GM12878 (cell line): ENCODE measurements at regions of chr2 and their contacts with region 1.

Region 1: GRCh38 chr2:34105015-34105767 is 506.1 kb upstream of the FAM98A start:
- DNase-seq: no peak
- ATAC-seq: no peak
- H3K4me3 ChIP-seq: no peak overlapping the region
- H3K27ac ChIP-seq: no peak overlapping the region
- H3K4me1 ChIP-seq: no peaks in the 10 kb centered on the region
- H3K27me3 ChIP-seq: no peaks in the 10 kb centered on the region; a peak in 1 of 4 replicates
- CTCF ChIP-seq: no peak
- EP300 ChIP-seq: no peak
- POLR2A ChIP-seq: no peak
- RAD21 ChIP-seq: no peak

Region 2: GRCh38 chr2:34050413-34050812 is 54.8 kb before region 1 on chr2:
- CTCF ChIA-PET with region 1: no interaction called
- POLR2A ChIA-PET with region 1: no interaction called
- RAD21 ChIA-PET with region 1: no interaction called
- SMC1A ChIA-PET with region 1: no interaction called
- in situ Hi-C with region 1: no loop called
- intact Hi-C with region 1: no loop called
- DNase-seq: no peak
- ATAC-seq: no peak
- H3K4me3 ChIP-seq: no peak overlapping the region
- H3K27ac ChIP-seq: no peak overlapping the region
- H3K4me1 ChIP-seq: no peaks in the 10 kb centered on the region
- H3K27me3 ChIP-seq: no peaks in the 10 kb centered on the region
- CTCF ChIP-seq: no peak
- EP300 ChIP-seq: no peak
- POLR2A ChIP-seq: no peak
- RAD21 ChIP-seq: no peak

Region 3: GRCh38 chr2:34570266-34570872 is 465.2 kb after region 1 on chr2:
- CTCF ChIA-PET with region 1: interaction called, 18 read pairs
- POLR2A ChIA-PET with region 1: no interaction called
- RAD21 ChIA-PET with region 1: interaction called, 4 read pairs
- SMC1A ChIA-PET with region 1: interaction called, 5 read pairs
- in situ Hi-C with region 1: no loop called
- intact Hi-C with region 1: no loop called
- DNase-seq: no peak
- ATAC-seq: peak; percentile 96
- H3K4me3 ChIP-seq: no peak overlapping the region
- H3K27ac ChIP-seq: no peak overlapping the region
- H3K4me1 ChIP-seq: no peaks in the 10 kb centered on the region
- H3K27me3 ChIP-seq: no peaks in the 10 kb centered on the region
- CTCF ChIP-seq: peak in 2 of 3 experiments; percentile 45 to 61; a peak in 3 of 6 replicates
- EP300 ChIP-seq: no peak
- POLR2A ChIP-seq: no peak
- RAD21 ChIP-seq: peak; percentile 35